Mammary epithelial cell (primary cell): ENCODE measurements at regions of chr17 and their contacts with region 1.

Region 1: DNA sequence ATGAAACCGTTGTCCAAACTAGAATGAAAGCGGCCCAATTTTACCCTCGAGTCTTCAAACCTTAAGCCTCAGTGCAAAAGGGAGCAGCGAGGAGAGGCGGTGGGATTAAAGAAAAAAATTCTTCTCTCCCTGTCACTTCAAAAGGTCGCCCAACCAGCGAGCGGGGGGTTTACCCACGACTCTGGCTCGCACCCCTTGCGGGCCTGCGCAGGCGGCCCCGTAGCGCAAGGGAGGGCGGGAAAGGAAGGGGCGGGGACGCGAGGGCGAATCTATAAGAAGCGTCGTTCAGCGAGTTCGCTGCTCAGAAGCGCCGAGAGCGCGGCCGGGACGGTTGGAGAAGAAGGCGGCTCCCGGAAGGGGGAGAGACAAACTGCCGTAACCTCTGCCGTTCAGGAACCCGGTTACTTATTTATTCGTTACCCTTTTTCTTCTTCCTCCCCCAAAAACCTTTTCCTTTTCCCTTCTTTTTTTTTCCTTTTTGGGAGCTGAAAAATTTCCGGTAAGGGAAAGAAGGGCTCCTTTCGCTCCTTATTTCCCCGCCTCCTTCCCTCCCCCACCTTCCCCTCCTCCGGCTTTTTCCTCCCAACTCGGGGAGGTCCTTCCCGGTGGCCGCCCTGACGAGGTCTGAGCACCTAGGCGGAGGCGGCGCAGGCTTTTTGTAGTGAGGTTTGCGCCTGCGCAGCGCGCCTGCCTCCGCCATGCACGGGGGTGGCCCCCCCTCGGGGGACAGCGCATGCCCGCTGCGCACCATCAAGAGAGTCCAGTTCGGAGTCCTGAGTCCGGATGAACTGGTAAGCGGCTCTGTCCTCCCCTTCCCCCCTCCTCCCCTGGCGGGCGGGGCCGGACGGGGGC is at the start of gene POLR2A:
- DNase-seq: peak; percentile 97
- H3K4me3 ChIP-seq: peak within 1 kb of the TSS; percentile 72 to 78 (median 77)
- H3K27ac ChIP-seq: peak within 1 kb of the TSS; percentile 96
- H3K4me1 ChIP-seq: peaks cover 21% of the 10 kb centered on the region
- H3K27me3 ChIP-seq: no peaks in the 10 kb centered on the region
- CTCF ChIP-seq: no peak
- total RNA-seq, gene POLR2A: 168 to 184 TPM

Region 2: DNA sequence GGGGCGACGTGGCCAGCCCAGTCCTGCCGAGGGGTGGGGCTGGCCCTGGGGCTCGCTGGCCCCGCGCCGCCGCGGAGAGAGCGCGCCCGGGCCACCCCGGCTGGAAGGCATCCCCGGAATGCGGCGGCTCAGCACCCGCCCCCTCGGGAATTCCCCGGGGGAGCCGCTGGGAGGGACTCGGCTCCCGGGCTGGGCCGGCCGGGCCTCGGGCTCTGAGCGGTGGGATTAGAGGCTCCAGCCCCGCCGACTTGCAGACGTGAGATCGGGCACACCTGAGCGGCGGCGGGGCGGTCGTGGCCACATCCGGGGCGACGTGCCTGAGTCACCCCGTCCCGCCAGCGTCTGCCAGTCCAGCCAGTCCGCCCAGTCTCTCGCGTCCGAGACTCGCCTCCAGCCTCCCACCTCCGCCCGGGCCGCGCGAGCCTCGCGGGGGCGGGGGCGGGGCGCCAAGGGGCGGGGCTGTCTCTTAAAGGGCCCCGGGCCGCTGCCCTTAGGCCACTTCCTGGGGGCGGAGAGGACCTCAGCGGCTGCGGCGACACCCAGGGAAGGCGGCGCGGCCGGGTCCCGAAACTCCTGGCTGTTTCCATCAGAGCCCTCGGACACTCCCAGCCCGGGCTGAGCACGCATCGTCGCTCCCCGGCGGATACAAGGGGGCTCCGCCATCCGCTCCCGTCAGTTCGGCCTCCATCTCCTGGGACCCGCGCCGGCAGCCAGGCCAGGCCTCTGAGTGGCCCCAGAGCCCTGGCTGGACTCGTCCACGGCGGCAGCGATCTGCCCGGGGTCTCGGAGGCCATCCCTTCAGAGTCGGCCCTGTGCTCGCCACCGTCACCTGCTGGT is 132.4 kb before region 1 on chr17 and contains the start of gene KCTD11:
- CTCF ChIA-PET with region 1: interaction called, 8 read pairs
- dilution Hi-C with region 1: no loop called
- in situ Hi-C with region 1: no loop called
- intact Hi-C with region 1: loop called (anchors 1 kb)
- DNase-seq: peak; percentile 99
- H3K4me3 ChIP-seq: peak within 1 kb of the TSS; percentile 60 to 88 (median 77)
- H3K27ac ChIP-seq: peak within 1 kb of the TSS; percentile 99
- H3K4me1 ChIP-seq: peaks cover 46% of the 10 kb centered on the region
- H3K27me3 ChIP-seq: no peaks in the 10 kb centered on the region
- CTCF ChIP-seq: peak in 1 of 2 donors; percentile 30
- total RNA-seq, gene KCTD11: 13.2 to 43.9 TPM

Region 3: GRCh38 chr17:7394452-7395191 is 89.7 kb before region 1 on chr17 and contains the start of gene PLSCR3:
- CTCF ChIA-PET with region 1: no interaction called
- dilution Hi-C with region 1: loop called (anchors 5 kb)
- in situ Hi-C with region 1: no loop called
- intact Hi-C with region 1: loop called (anchors 2 kb)
- DNase-seq: peak; percentile 88
- H3K4me3 ChIP-seq: peak within 1 kb of the TSS; percentile 75 to 98 (median 88)
- H3K27ac ChIP-seq: peak within 1 kb of the TSS; percentile 70
- H3K4me1 ChIP-seq: peaks cover 10% of the 10 kb centered on the region
- H3K27me3 ChIP-seq: no peaks in the 10 kb centered on the region
- CTCF ChIP-seq: peak in 1 of 2 donors; percentile 46
- total RNA-seq, gene PLSCR3: 32.3 to 127 TPM

Region 4: GRCh38 chr17:7429722-7430121 is 54.6 kb before region 1 on chr17:
- CTCF ChIA-PET with region 1: interaction called, 6 read pairs
- dilution Hi-C with region 1: loop called (anchors 5 kb)
- in situ Hi-C with region 1: no loop called
- intact Hi-C with region 1: no loop called
- DNase-seq: no peak
- H3K4me3 ChIP-seq: no peak overlapping the region
- H3K27ac ChIP-seq: no peak overlapping the region
- H3K4me1 ChIP-seq: no peaks in the 10 kb centered on the region
- H3K27me3 ChIP-seq: no peaks in the 10 kb centered on the region
- CTCF ChIP-seq: no peak

Region 5: DNA sequence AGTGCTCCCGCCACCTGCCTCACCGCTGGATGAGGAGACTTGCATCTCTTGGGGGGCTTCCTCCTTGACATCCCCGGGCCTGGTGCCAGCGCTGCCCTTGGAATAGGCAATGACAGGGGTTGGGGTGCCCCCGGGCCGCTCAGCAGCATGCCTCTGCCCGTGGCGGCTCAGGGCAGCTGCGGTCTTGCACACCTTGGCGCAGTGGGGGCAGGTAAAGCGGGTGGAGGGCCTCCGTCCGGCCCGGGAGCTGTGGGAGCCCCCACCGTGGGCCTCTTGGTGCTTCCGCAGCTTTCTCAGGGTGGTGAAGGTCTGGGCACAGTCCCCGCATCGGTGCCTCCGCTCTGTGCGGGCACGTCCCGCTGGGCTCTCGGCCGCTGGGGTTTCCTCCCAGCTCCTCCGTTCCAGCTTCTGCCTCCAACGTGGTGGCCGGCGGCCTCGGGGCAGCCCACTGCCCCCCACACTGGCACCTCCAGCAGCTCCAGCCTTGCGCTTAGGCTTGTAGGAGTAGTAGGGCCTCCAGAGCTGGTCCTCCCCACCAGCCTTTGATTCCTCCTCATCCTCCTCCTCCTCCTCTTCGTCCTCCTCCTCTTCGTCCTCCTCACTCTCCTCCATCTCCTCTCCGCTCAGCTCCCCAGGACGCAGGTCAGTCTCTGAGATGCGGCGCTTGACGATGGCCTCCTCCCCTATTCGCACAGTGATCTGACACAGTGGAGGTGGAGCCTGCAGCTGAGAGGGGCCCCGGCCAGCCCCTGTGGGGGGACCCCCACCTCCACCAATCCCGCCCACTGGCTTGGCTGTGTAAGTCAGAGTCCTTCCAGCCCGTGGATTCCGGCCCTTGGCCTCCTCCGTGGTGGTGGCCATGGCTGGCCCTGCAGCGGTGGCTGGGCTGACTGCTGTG is 21.6 kb before region 1 on chr17:
- CTCF ChIA-PET with region 1: no interaction called
- dilution Hi-C with region 1: no loop called
- in situ Hi-C with region 1: no loop called
- intact Hi-C with region 1: loop called (anchors 2 kb)
- DNase-seq: no peak
- H3K4me3 ChIP-seq: no peak overlapping the region
- H3K27ac ChIP-seq: no peak overlapping the region
- H3K4me1 ChIP-seq: peaks cover 37% of the 10 kb centered on the region
- H3K27me3 ChIP-seq: no peaks in the 10 kb centered on the region
- CTCF ChIP-seq: no peak

Region 6: DNA sequence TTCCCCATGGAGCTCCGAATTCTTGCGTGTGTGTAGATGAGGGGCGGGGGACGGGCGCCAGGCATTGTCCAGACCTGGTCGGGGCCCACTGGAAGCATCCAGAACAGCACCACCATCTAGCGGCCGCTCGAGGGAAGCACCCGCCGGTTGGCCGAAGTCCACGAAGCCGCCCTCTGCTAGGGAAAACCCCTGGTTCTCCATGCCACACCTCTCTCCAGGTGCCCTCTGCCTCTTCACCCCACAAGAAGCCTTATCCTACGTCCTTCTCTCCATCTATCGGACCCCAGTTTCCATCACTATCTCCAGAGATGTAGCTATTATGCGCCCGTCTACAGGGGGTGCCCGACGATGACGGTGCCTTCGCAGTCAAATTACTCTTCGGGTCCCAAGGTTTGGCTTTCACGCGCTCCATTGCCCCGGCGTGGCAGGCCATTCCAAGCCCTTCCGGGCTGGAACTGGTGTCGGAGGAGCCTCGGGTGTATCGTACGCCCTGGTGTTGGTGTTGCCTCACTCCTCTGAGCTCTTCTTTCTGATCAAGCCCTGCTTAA is 76.8 kb after region 1 on chr17:
- CTCF ChIA-PET with region 1: interaction called, 4 read pairs
- dilution Hi-C with region 1: no loop called
- in situ Hi-C with region 1: no loop called
- intact Hi-C with region 1: loop called (anchors 1 kb)
- DNase-seq: peak; percentile 87
- H3K4me3 ChIP-seq: peak overlapping the region; percentile 60 to 82 (median 73)
- H3K27ac ChIP-seq: peak overlapping the region; percentile 76
- H3K4me1 ChIP-seq: peaks cover 40% of the 10 kb centered on the region
- H3K27me3 ChIP-seq: no peaks in the 10 kb centered on the region
- CTCF ChIP-seq: peak; percentile 64 to 82

Region 7: DNA sequence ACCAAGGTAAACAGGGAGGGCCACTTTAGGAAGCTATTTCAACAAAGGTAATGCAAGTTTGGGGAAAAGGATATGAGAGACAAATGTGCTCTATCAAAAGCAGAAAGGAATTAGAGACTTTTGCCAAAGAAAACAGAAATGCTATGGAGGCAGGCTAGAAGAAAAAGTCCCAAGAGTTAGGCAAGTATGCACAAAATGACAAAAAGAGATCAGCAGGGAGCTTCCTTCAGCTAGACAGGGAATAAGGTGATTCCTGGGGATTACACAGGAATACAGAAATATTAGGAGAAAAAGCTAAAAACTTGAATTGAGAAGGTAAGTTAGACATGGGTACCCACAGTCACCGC is 128.0 kb after region 1 on chr17:
- CTCF ChIA-PET with region 1: no interaction called
- dilution Hi-C with region 1: no loop called
- in situ Hi-C with region 1: no loop called
- intact Hi-C with region 1: no loop called
- DNase-seq: no peak
- H3K4me3 ChIP-seq: no peak overlapping the region
- H3K27ac ChIP-seq: no peak overlapping the region
- H3K4me1 ChIP-seq: peaks cover 21% of the 10 kb centered on the region
- H3K27me3 ChIP-seq: no peaks in the 10 kb centered on the region
- CTCF ChIP-seq: no peak